ENCODE measurements at regions of chr14 and their contacts with region 1.

Region 1: DNA sequence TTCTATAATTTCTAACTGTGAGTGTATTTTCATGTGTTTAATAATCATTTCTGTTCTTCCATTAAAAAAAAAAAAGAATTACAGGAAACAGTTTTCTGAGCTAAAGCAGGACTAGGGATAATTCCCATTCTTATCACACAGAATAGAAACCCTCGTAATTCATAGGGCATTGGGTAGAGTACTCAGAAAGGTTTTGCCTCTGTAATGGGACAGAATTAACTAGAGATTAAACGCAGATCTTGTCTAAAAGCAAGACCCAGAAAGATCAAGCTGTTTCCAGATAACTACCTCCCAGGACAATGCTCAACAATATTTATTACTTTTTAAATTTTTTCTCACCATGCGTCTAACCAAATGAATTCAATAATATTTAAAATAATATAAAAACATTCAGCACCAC is 10.2 kb downstream of the GSKIP start:
- DNase-seq: no peak
- H3K4me3 ChIP-seq: no peak overlapping the region
- H3K27ac ChIP-seq: no peak overlapping the region
- H3K4me1 ChIP-seq: no peaks in the 10 kb centered on the region
- H3K27me3 ChIP-seq: no peaks in the 10 kb centered on the region
- CTCF ChIP-seq: no peak

Region 2: GRCh38 chr14:96318836-96319235 is 54.7 kb before region 1 on chr14:
- CTCF ChIA-PET with region 1: no interaction called
- POLR2A ChIA-PET with region 1: no interaction called
- intact Hi-C with region 1: no loop called
- DNase-seq: no peak
- H3K4me3 ChIP-seq: no peak overlapping the region
- H3K27ac ChIP-seq: no peak overlapping the region
- H3K4me1 ChIP-seq: no peaks in the 10 kb centered on the region
- H3K27me3 ChIP-seq: no peaks in the 10 kb centered on the region
- CTCF ChIP-seq: no peak

Region 3: GRCh38 chr14:96357216-96357615 is 16.3 kb before region 1 on chr14:
- CTCF ChIA-PET with region 1: no interaction called
- POLR2A ChIA-PET with region 1: no interaction called
- intact Hi-C with region 1: no loop called
- DNase-seq: no peak
- H3K4me3 ChIP-seq: no peak overlapping the region
- H3K27ac ChIP-seq: no peak overlapping the region
- H3K4me1 ChIP-seq: peaks cover 12% of the 10 kb centered on the region
- H3K27me3 ChIP-seq: no peaks in the 10 kb centered on the region
- CTCF ChIP-seq: no peak

Region 4: GRCh38 chr14:96519970-96520369 is 146.4 kb after region 1 on chr14:
- CTCF ChIA-PET with region 1: interaction called, 12 read pairs
- POLR2A ChIA-PET with region 1: no interaction called
- intact Hi-C with region 1: no loop called
- DNase-seq: no peak
- H3K4me3 ChIP-seq: no peak overlapping the region
- H3K27ac ChIP-seq: no peak overlapping the region
- H3K4me1 ChIP-seq: no peaks in the 10 kb centered on the region
- H3K27me3 ChIP-seq: no peaks in the 10 kb centered on the region
- CTCF ChIP-seq: no peak

Measured in PC-9 (cell line).